AG04449 (cell line): ENCODE measurements at regions of chr9 and their contacts with region 1.

Region 1: DNA sequence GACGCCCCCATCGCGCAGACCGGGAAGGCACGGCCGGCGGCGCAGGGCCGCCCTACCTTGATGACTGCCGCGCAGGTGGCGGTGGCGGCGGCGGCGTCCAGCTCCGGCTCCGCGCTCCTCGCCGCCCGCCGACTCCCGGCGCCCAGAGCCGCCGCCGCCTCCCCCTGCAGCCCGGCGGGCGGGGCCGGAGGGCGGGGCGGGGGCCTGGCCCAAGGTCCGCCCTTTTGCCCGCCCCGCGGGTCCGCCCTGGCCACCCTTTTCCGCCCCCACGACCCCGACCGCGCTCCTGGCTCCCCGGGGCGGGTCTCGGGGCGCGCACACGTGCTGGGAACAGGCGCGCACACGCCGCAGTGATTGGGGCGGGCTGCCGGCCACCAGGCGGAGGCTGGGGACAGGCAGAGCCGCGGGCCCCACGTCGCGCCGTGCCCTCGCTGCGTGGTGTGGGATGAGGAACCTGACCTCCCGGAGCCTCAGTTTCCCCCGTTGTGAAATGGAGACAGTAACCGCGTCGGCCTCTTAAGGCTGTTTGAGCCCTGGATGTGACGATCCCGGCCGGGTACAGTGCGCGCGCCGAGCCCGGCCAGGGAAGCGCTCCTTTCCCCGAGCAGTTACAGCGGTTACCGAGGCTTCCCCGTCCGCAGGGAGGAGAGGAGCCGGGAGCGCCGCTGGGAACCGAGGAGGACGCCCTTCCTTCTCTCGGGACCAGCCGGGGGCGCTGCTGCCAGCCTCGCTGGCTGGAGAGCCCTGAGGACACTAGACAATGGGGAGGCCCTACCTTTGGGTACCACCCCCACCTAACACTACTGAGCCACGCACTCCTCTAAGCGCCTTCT is at the start of gene CORO2A:
- DNase-seq: no peak
- H3K4me3 ChIP-seq: peak within 1 kb of the TSS; percentile 65
- CTCF ChIP-seq: peak; percentile 71

Region 2: GRCh38 chr9:97873877-97874276 is 318.8 kb before region 1 on chr9:
- CTCF ChIA-PET with region 1: no interaction called
- POLR2A ChIA-PET with region 1: no interaction called
- DNase-seq: no peak
- H3K4me3 ChIP-seq: no peak overlapping the region
- CTCF ChIP-seq: no peak

Region 3: DNA sequence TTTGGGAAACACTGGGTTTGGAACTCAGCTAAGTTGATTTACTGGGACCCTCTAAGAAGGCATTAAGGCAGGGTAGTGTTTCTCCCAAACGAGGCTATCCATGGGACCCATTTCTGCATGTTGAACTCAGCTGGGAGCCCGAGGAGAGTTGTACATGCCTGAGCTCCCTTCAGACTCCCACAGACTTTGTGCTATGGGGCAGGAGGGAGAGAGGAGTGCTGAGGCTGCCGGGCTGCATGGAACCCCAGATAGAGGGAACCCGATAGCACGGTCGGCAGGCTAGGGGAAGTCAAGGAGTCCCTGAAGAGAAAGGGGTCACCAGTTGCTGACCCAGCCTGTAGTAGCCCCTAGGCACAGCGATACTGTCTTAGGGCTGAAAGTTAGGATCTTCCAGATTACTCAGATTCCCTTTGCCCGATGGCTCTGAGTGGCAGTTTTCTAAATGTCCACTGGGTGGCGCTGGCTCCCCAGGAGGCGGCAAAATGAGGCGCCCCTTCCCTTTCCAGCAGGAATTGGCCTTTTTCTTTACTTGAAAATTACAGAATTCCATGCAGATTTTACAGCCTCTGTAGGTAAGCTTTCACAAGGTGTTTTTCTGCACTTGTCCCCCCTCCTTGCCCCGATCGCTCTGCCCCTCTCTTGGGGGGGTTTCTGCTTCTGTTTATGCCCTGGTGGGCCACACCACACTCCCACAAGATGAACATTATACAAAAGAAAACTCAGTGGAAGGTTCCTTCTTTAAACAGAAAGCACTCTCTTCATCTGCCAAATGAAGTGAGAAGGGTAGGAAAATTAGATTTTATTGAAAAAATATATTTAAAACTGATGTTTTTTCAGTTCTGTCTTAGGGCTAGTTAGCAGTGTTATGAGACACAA is 118.4 kb before region 1 on chr9:
- CTCF ChIA-PET with region 1: interaction called, 13 read pairs
- POLR2A ChIA-PET with region 1: no interaction called
- DNase-seq: no peak
- H3K4me3 ChIP-seq: no peak overlapping the region
- CTCF ChIP-seq: peak; percentile 79

Region 4: GRCh38 chr9:98178874-98179850 is 13.6 kb before region 1 on chr9:
- CTCF ChIA-PET with region 1: interaction called, 10 read pairs
- POLR2A ChIA-PET with region 1: interaction called, 3 read pairs
- DNase-seq: no peak
- H3K4me3 ChIP-seq: no peak overlapping the region
- CTCF ChIP-seq: no peak

Region 5: GRCh38 chr9:98207606-98208005 is 14.9 kb after region 1 on chr9:
- CTCF ChIA-PET with region 1: interaction called, 75 read pairs
- POLR2A ChIA-PET with region 1: no interaction called
- DNase-seq: no peak
- H3K4me3 ChIP-seq: no peak overlapping the region
- CTCF ChIP-seq: peak; percentile 12

Region 6: DNA sequence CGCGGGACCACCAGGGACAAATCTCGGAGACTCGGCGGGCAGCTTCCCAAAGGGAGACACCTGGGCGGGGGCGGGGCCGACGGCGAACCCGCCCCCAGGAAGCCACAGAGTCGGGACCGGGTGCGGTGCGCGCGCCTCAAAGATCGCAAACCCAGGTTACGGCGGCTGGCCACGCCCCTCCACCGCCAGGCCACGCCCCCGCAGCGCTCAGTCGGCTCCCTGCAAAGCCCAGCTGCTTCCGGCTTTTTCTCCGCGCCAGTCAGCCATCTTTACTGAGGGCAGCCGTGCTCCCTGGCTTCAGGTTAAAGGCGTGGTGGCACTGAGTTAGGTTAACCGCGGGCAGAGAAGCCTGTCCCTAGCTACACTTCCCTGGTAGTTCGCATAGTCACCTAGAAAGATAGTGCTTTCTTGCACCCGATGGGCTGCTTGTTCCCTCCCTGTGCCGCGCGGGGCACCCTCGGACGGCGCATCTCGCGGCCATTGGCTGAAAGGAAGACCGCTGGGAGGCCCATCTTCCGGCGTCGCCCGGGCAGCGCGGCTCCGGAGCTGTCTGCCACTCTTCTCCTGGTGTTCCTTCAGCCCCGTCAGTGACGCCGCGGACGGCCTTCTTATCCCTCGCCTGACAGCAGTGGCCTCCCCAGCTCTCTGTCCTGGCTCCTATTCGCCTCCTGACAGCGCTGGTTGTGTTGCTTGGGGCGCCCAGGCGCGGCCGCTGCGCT is 63.0 kb after region 1 on chr9 and contains the start of gene TBC1D2:
- CTCF ChIA-PET with region 1: interaction called, 25 read pairs
- POLR2A ChIA-PET with region 1: interaction called, 4 read pairs
- DNase-seq: peak; percentile 45
- H3K4me3 ChIP-seq: peak within 1 kb of the TSS; percentile 87
- CTCF ChIP-seq: no peak

Region 7: GRCh38 chr9:98263482-98264357 is 71.0 kb after region 1 on chr9:
- CTCF ChIA-PET with region 1: interaction called, 15 read pairs
- POLR2A ChIA-PET with region 1: no interaction called
- DNase-seq: peak; percentile 29
- H3K4me3 ChIP-seq: no peak overlapping the region
- CTCF ChIP-seq: peak; percentile 96